ENCODE measurements at regions of chr7 and their contacts with region 1.

Region 1: DNA sequence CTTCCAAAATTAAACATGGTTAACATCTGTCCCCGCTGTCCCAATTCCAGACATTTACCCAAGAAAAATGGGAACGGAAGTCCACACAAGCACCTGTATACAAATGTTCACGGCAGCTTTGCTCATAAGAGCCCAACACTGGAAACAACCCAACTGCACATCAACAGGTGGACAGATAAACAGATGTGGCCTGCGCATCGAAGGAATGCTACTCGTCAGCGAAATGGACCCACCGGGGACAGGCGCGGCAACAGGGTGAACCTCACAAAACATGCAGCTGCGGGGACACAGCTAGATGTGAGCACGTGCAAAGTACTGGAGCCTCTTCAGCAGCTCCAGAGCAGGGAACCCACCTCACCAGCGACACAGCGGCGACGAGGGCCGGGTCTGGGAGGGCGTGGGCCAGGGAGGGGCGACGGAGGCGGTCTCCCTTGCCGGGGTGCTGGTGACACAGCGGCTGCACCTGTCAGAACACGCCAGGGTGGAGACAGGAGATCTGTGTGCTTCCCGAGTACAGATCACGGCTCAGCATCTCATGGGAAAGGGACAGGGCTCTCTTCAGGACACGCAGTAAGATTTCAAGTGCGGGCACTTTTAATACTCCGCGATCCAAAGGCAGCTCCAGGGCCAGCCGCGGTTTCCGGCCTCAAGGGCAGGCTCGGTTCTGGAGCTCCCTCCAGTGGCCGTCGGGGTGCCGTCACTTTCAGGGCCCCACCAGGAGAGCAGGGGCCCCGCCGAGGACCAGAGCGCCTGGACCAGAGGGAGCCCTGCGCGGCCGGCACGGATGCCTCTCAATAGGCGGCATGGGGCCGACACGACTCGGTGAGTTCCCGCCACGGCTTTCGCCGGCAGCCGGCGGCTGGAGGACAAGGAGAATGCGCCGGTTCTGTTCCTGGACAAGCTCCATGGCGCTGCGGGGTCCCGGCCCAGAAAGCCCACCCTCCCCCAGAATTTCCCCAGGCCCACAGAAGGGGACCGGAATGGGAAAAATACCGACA is 21.2 kb downstream of the GPR146 start:
- DNase-seq: peak; percentile 92
- ATAC-seq: peak; percentile 91
- H3K4me3 Mint-ChIP-seq: no peak overlapping the region
- H3K27ac Mint-ChIP-seq: no peak overlapping the region; the same call in 1 of the 2 replicates
- H3K4me1 Mint-ChIP-seq: 0 out of 2 replicates have a peak, but pooled peaks cover 3% of the 10 kb centered on the region
- H3K27me3 Mint-ChIP-seq: no peaks in the 10 kb centered on the region
- CTCF ChIP-seq: peak; percentile 72

Region 2: GRCh38 chr7:936131-937054 is 129.2 kb before region 1 on chr7:
- CTCF ChIA-PET with region 1: no interaction called
- POLR2A ChIA-PET with region 1: no interaction called
- DNase-seq: peak; percentile 10
- ATAC-seq: no peak
- H3K4me3 Mint-ChIP-seq: no peak overlapping the region
- H3K27ac Mint-ChIP-seq: 0 out of 2 replicates have a peak overlapping the region, but pooled peaks have one; percentile 32
- H3K4me1 Mint-ChIP-seq: no peaks in the 10 kb centered on the region
- H3K27me3 Mint-ChIP-seq: peaks cover 17% of the 10 kb centered on the region
- CTCF ChIP-seq: no peak

Region 3: DNA sequence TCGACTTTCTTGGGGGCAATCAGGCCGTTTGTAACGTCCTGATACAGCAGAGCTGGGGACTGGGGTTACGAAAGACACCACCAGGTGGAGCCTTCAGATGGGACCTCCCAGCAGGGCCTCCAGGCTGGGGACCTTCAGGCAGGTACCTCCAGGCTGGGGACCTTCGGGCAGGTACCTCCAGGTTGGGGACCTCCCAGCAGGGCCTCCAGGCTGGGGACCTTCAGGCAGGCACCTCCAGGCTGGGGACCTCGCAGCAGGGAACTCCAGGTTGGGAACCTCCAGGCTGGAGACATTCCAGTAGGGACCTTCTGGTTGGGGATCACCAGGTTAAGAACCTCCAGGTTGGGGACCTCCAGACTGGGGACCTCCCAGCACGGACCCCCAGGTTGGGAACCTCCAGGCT is 44.7 kb before region 1 on chr7:
- CTCF ChIA-PET with region 1: interaction called, 20 read pairs
- POLR2A ChIA-PET with region 1: no interaction called
- DNase-seq: no peak
- ATAC-seq: peak; percentile 16; the same call in 1 of the 2 replicates
- H3K4me3 Mint-ChIP-seq: no peak overlapping the region
- H3K27ac Mint-ChIP-seq: no peak overlapping the region
- H3K4me1 Mint-ChIP-seq: no peaks in the 10 kb centered on the region
- H3K27me3 Mint-ChIP-seq: no peaks in the 10 kb centered on the region
- CTCF ChIP-seq: no peak

Region 4: GRCh38 chr7:1028031-1028770 is 37.4 kb before region 1 on chr7:
- CTCF ChIA-PET with region 1: interaction called, 10 read pairs
- POLR2A ChIA-PET with region 1: no interaction called
- DNase-seq: peak; percentile 86
- ATAC-seq: peak; percentile 80
- H3K4me3 Mint-ChIP-seq: no peak overlapping the region
- H3K27ac Mint-ChIP-seq: no peak overlapping the region
- H3K4me1 Mint-ChIP-seq: peaks cover 7% of the 10 kb centered on the region; the same call in 1 of the 2 replicates
- H3K27me3 Mint-ChIP-seq: no peaks in the 10 kb centered on the region
- CTCF ChIP-seq: no peak

Region 5: GRCh38 chr7:1044191-1045068 is 21.1 kb before region 1 on chr7 and contains the start of gene GPR146:
- CTCF ChIA-PET with region 1: interaction called, 27 read pairs
- POLR2A ChIA-PET with region 1: interaction called, 3 read pairs
- DNase-seq: peak; percentile 99
- ATAC-seq: peak; percentile 93
- H3K4me3 Mint-ChIP-seq: peak within 1 kb of the TSS; percentile 71
- H3K27ac Mint-ChIP-seq: peak within 1 kb of the TSS; percentile 97
- H3K4me1 Mint-ChIP-seq: peaks cover 31% of the 10 kb centered on the region
- H3K27me3 Mint-ChIP-seq: no peaks in the 10 kb centered on the region
- CTCF ChIP-seq: 0 out of 2 replicates have a peak, but pooled peaks have one; percentile 18
- total RNA-seq, gene GPR146: 0.87 to 1.1 TPM (median 0.92 TPM) in 3 replicates

Region 6: GRCh38 chr7:1053002-1053478 is 12.5 kb before region 1 on chr7:
- CTCF ChIA-PET with region 1: interaction called, 27 read pairs
- POLR2A ChIA-PET with region 1: no interaction called
- DNase-seq: peak; percentile 49
- ATAC-seq: peak; percentile 68
- H3K4me3 Mint-ChIP-seq: no peak overlapping the region
- H3K27ac Mint-ChIP-seq: 0 out of 2 replicates have a peak overlapping the region, but pooled peaks have one; percentile 81
- H3K4me1 Mint-ChIP-seq: peaks cover 18% of the 10 kb centered on the region
- H3K27me3 Mint-ChIP-seq: no peaks in the 10 kb centered on the region
- CTCF ChIP-seq: no peak

Region 7: GRCh38 chr7:1076181-1077072 is 10.9 kb after region 1 on chr7:
- CTCF ChIA-PET with region 1: interaction called, 15 read pairs
- POLR2A ChIA-PET with region 1: interaction called, 3 read pairs
- DNase-seq: no peak
- ATAC-seq: no peak
- H3K4me3 Mint-ChIP-seq: no peak overlapping the region
- H3K27ac Mint-ChIP-seq: no peak overlapping the region
- H3K4me1 Mint-ChIP-seq: no peaks in the 10 kb centered on the region
- H3K27me3 Mint-ChIP-seq: no peaks in the 10 kb centered on the region
- CTCF ChIP-seq: no peak

Region 8: GRCh38 chr7:1086588-1087464 is 21.3 kb after region 1 on chr7:
- CTCF ChIA-PET with region 1: interaction called, 10 read pairs
- POLR2A ChIA-PET with region 1: no interaction called
- DNase-seq: peak; percentile 88
- ATAC-seq: peak; percentile 89
- H3K4me3 Mint-ChIP-seq: peak overlapping the region; percentile 63
- H3K27ac Mint-ChIP-seq: no peak overlapping the region
- H3K4me1 Mint-ChIP-seq: peaks cover 20% of the 10 kb centered on the region
- H3K27me3 Mint-ChIP-seq: no peaks in the 10 kb centered on the region
- CTCF ChIP-seq: peak; percentile 91

Region 9: DNA sequence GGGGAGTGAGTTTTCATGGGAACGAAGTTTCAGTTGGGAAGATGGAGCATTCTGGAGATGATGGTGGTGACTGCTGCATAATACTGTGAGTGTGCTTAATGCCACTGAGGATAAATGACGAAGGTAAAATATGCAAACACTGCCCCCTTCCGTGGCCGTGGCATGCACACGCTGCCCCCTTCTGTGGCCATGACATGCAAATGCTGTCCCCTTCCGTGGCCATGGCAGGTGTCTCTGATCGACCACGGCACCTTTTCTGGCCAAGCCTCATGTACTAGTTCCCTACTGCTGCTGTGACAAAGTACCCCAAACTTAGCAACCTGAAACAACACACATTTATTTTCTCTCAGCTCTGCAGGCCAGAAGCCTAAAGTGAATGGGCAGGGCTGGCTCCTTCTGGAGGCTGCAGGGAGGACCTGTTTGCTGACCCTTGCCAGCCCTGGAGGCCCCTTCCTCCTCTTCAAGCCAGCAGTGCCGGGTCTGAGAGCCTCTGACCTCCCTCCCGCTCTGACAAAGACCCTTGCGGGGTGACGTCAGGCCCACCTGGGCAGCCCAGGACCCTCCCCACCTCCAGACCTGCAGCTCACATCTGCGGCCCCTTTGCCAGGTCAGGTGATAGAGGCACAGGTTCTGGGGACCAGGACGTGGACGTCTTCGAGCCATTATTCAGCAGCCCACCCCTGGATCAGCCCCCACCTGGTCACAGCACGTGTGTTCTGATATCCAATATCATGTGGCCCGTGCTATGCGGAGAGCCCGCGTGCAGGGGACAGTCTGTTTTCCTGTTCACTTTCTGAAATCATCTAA is 311.7 kb after region 1 on chr7:
- CTCF ChIA-PET with region 1: no interaction called
- POLR2A ChIA-PET with region 1: no interaction called
- DNase-seq: no peak
- ATAC-seq: no peak
- H3K4me3 Mint-ChIP-seq: no peak overlapping the region
- H3K27ac Mint-ChIP-seq: no peak overlapping the region
- H3K4me1 Mint-ChIP-seq: no peaks in the 10 kb centered on the region
- H3K27me3 Mint-ChIP-seq: peaks cover 4% of the 10 kb centered on the region; the same call in 1 of the 2 replicates
- CTCF ChIP-seq: no peak